ENCODE measurements at regions of chr3 and their contacts with region 1.

Region 1: DNA sequence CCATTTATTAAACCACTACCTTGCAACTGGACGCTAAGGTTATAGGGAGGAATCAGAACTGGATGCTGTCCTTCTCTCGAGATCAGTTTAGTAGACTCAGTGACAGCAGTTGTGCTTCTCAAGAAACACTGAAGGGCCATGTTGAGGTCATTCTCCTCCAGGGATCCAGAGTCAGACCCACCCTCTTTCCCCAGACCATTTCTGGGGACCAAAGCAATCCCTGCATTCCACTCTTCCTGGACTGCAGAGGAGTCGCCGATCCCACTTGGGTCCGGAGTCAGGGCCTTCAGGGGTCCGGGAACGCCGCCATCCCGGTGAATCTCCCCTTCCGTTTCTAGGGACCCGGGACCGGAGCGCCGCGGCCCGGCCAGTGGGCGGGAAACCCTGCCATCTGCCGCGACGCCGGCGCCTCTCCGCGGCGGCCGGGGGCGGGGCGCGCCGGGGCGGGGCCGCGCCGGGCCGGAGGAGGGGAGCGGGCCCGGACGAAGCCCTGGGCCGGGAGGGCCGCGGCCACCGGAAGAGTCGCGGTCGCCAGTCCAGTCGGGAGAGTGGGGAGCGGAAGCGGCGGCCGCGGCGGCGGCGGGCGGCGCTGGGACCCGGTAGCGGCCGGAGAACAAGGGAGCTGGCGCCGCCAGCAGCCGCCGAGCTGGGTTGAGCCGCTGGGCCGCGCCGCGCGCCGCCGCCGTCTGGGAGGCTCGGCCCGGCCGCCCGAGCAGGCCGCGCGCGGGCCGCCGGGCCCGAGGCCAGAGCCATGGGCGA is at the start of gene DVL3:
- DNase-seq: peak; percentile 68 to 87
- H3K4me3 ChIP-seq: peak within 1 kb of the TSS; percentile 95 to 97
- H3K27ac ChIP-seq: peak within 1 kb of the TSS; percentile 94 to 98
- H3K4me1 ChIP-seq: peaks cover 0 to 52% (median 33%) of the 10 kb centered on the region in 4 donors
- H3K27me3 ChIP-seq: no peaks in the 10 kb centered on the region
- CTCF ChIP-seq: no peak

Region 2: DNA sequence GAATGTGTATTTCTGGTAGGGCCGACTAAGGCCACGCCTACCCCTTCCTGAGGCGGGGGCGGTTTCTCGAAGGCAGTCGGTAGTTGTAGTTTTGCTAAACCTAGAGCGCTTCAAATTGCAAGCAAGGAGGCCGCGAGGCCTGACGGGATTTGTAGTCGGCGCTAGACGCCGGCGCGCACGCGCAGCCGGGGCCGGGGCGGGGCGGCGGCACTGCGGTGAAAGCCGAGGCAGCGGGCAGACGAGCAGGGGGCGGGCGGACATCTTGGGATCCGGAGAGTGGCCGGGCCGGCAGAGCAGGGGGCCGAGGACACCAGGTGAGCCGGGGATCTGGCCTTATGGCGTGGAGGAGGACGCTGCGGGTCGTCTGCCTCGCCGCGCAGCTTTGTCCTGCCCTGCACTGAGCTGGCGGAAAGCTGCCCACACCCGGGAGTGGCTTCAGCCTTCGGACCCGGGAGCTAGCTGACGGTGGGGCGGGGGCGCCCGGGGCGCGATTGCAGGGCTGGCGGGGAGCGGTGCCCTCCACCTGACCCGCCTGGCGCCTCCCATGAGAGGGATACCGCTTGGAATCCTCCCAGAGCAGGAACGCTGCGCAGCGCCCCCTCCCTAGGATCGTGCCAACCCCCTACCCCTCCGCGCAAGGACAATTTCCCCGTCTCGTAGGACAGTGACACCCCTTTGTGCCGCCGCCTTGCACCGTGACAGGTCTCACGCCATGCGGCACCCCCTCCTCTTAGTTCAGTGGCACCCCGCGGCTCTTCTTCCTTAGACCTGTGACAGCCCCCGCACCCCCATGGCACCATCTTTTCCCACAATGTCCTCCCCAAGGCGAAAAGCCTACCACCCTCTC is 19.8 kb after region 1 on chr3 and contains the start of gene AP2M1:
- intact Hi-C with region 1: loop called (anchors 2 kb)
- DNase-seq: peak; percentile 99
- H3K4me3 ChIP-seq: peak within 1 kb of the TSS; percentile 95 to 100
- H3K27ac ChIP-seq: peak within 1 kb of the TSS; percentile 97 to 99
- H3K4me1 ChIP-seq: peaks cover 0 to 37% (median 28%) of the 10 kb centered on the region in 4 donors
- H3K27me3 ChIP-seq: no peaks in the 10 kb centered on the region
- CTCF ChIP-seq: no peak

Region 3: DNA sequence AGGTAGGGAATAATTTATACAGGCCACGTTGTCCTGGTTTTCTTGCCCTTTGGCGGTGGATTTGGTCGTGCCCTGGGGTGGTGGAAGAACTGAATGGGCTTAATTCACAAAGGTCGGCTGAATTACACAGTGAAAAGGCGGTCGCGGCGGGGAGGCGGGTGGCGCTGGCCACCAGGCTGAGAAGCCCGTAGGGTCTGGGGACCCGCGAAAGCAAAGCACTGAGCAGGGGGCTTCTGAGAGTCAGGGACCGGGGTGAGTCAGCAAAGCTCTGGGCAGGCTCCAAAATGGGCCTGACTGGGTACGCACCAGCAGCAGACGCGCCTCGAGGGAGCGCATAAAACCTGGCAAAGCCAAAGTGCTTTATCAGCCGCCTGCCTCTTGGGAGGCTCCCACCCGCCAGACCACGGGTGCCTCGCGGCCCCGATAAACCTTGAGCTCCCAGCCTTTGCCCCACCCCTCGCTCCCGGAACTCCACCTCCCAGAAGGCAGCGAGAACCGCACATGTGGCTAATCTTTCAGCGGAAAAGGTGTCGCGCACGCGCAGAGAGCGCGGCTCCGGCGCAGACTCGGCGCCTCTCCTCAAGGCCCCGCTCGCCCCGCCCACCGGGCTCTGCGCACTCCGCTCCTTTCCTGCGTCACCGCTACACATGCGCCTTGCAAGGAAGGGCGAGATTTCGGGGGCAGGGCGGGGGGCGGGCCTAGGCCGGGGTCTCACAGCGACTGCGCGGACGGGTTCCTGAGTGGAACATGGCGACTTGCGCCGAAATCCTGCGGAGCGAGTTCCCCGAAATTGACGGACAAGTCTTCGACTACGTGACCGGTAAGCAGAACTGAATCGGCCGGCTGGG is 30.6 kb after region 1 on chr3 and contains the start of gene ABCF3:
- intact Hi-C with region 1: loop called (anchors 5 kb)
- DNase-seq: peak; percentile 99 to 100
- H3K4me3 ChIP-seq: peak within 1 kb of the TSS; percentile 77 to 83
- H3K27ac ChIP-seq: peak within 1 kb of the TSS; percentile 87
- H3K4me1 ChIP-seq: peaks cover 0 to 30% (median 23%) of the 10 kb centered on the region in 4 donors
- H3K27me3 ChIP-seq: no peaks in the 10 kb centered on the region
- CTCF ChIP-seq: no peak